T-cell (primary cell): ENCODE measurements at regions of chr9 and their contacts with region 1.

Region 1: DNA sequence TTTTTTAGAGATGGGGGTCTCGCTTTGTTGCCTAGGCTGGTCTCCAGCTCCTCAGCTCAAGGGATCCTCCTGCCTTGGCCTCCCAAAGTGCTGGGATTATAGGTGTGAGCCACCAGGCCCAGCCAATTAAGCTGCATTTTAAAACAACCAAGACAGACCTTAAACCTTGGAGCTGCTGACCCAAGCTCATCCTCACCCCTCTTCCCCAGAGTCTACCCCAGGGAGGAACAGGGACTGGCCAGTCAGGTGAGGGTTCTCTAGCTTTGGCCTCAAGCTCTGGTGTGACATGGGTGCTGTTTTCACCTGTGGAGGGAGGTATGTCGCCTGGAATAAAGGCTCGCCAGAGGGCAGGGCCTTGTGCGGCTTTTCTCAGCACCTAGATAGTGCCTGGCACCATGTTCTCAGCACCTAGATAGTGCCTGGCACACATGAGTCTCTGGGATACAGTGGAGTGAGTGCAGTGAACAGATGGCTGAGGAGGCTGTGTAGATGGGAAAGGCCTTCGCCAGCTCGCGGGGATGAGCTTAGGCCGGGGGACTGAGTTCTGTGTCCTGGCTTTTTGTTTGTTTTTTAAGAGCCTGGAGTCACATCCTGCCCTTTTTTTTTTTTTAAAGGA is 7.4 kb downstream of the CDK9 start:
- DNase-seq: no peak
- ATAC-seq: no peak
- H3K4me3 ChIP-seq: no peak overlapping the region
- H3K4me3 Mint-ChIP-seq: no peak overlapping the region
- H3K27ac ChIP-seq: no peak overlapping the region
- H3K27ac Mint-ChIP-seq: peak overlapping the region; percentile 43 to 72
- H3K4me1 ChIP-seq: peaks cover 5 to 44% of the 10 kb centered on the region in 2 experiments
- H3K4me1 Mint-ChIP-seq: peaks cover 35 to 48% (median 41%) of the 10 kb centered on the region in 3 donors
- H3K27me3 ChIP-seq: no peaks in the 10 kb centered on the region
- H3K27me3 Mint-ChIP-seq: no peaks in the 10 kb centered on the region

Region 2: GRCh38 chr9:127742435-127743088 is 50.6 kb before region 1 on chr9:
- CTCF ChIA-PET with region 1: no interaction called
- POLR2A ChIA-PET with region 1: no interaction called
- DNase-seq: no peak
- ATAC-seq: no peak
- H3K4me3 ChIP-seq: no peak overlapping the region
- H3K4me3 Mint-ChIP-seq: no peak overlapping the region
- H3K27ac ChIP-seq: no peak overlapping the region
- H3K27ac Mint-ChIP-seq: no peak overlapping the region
- H3K4me1 ChIP-seq: peaks cover 0 to 6% of the 10 kb centered on the region in 2 experiments
- H3K4me1 Mint-ChIP-seq: peaks cover 8 to 13% (median 10%) of the 10 kb centered on the region in 3 donors
- H3K27me3 ChIP-seq: no peaks in the 10 kb centered on the region
- H3K27me3 Mint-ChIP-seq: no peaks in the 10 kb centered on the region

Region 3: DNA sequence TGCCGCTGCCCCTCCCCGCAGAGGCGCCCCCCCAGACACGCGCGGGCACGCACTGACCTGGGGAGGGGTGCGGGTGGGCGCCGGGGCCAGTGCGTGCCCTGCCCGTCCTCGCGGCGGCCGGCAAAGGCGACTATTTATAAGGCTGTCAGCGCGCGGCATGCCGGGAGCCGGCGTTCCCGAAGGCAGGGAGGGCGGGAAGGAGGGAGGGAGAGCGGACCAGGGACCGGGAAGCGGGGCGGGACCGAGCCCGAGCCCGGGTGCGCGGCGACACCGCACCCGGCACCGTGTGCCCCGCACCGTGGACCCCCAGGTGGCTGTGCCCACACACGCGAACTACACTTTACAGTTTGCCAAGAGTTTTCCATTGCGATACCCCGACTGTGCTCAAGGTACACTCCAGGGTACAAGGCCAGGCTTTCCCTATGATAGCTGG is 84.4 kb after region 1 on chr9 and contains the start of gene AK1:
- CTCF ChIA-PET with region 1: no interaction called
- POLR2A ChIA-PET with region 1: no interaction called
- DNase-seq: no peak
- ATAC-seq: peak in 1 of 4 experiments; percentile 24
- H3K4me3 ChIP-seq: no peak within 1 kb of the TSS
- H3K4me3 Mint-ChIP-seq: peak within 1 kb of the TSS in 2 of 3 donors; percentile 6 to 43
- H3K27ac ChIP-seq: no peak within 1 kb of the TSS
- H3K27ac Mint-ChIP-seq: no peak within 1 kb of the TSS
- H3K4me1 ChIP-seq: peaks cover 0 to 11% of the 10 kb centered on the region in 2 experiments
- H3K4me1 Mint-ChIP-seq: peaks cover 10 to 16% (median 15%) of the 10 kb centered on the region in 3 donors
- H3K27me3 ChIP-seq: peaks cover 0 to 25% of the 10 kb centered on the region in 2 experiments
- H3K27me3 Mint-ChIP-seq: peaks cover 0 to 4% of the 10 kb centered on the region in 2 donors
- total RNA-seq, gene AK1: 40.5 to 54.9 (median 50.4) TPM

Region 4: DNA sequence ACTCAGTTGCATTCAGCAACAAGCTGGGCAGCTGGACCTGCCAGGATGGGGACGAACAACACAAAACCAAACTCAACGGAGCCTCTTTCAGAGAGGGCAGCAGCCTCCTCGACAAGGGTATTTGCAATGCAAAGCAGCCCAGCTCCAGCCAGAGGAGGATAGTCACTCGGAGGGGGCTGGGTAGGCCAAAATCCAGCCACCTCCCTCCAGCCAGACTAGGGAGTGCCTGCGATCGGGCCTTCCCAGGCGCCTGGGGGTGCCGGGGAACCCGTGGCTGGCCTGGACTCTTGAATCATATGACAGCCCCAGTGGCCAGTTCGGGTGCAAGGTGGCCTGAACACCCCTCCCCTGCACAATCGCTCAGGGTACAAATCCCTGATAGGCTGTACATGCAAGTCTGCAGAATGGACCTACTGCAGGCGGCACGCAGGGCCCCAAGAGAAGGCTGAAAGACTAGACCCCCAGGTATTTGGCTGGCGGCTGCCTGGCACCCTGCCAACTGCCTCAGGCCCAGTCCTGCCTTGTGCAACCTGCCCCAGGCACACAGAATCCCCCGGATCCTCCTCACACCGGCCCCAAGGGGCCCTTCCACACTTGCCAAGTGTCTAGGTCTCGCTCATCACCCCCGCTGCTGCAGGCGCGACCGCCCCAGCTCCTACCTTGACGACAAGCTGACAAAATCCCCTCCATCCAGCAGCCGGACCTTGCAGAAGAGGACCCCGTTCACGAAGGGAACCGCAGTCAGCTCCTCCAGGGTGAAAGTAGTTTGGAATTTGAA is 186.3 kb after region 1 on chr9:
- CTCF ChIA-PET with region 1: no interaction called
- POLR2A ChIA-PET with region 1: interaction called in 1 of 2 experiments, 12 read pairs
- DNase-seq: peak in 3 of 35 experiments; percentile 35 to 52 (median 41)
- ATAC-seq: no peak
- H3K4me3 ChIP-seq: peak overlapping the region; percentile 90 to 98
- H3K4me3 Mint-ChIP-seq: peak overlapping the region; percentile 91 to 97 (median 96)
- H3K27ac ChIP-seq: peak overlapping the region; percentile 67
- H3K27ac Mint-ChIP-seq: peak overlapping the region; percentile 88 to 97
- H3K4me1 ChIP-seq: peaks cover 28 to 91% of the 10 kb centered on the region in 2 experiments
- H3K4me1 Mint-ChIP-seq: peaks cover 45 to 58% (median 54%) of the 10 kb centered on the region in 3 donors
- H3K27me3 ChIP-seq: no peaks in the 10 kb centered on the region
- H3K27me3 Mint-ChIP-seq: no peaks in the 10 kb centered on the region